ENCODE measurements at regions of chr17 and their contacts with region 1.

Region 1: DNA sequence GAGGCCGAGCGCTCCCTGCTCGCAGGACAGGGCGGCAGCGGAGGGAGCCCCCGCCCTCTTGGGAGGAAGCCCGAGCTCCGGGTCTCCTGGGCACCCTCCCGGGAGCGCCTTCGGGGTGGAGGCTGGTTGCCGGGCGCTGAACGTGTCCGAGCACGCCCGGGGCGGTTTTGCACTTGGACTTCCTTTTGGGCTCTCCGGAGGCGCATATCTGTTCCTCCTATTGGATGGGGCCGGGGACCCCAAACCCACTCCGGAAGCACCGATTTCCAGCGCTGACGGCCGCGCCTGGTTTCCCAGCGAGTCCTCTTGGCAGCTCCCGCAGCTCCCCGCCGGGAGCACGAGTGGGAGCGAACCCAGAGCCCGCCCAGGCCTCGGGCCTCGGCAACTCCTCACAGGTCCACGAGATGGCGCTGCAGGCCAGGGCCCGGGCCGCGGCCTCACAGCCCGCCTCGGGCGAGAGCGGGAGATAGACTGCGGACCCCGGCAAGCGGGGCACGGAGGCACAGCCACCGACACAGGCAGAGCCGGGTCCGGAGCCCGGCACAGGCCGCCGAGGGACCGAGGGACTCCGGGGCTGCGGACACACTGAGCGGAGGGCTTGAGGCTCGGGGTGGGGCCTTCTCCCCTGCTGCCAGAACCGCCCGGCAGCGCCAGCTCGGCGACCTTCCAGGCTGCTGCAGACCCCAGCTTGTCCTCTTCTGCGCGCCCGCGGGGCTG is 12.7 kb downstream of the TBX2 start:
- DNase-seq: no peak
- H3K4me3 ChIP-seq: peak overlapping the region; percentile 59 to 78 (median 66)
- H3K27ac ChIP-seq: peak overlapping the region; percentile 91 to 93 (median 92)
- H3K4me1 ChIP-seq: peaks cover 49 to 95% (median 84%) of the 10 kb centered on the region in 4 donors
- H3K27me3 ChIP-seq: peaks cover 0 to 28% (median 0%) of the 10 kb centered on the region in 4 donors
- CTCF ChIP-seq: peak in 2 of 3 experiments; percentile 95 to 97
- EP300 ChIP-seq: no peak
- POLR2A ChIP-seq: no peak

Region 2: DNA sequence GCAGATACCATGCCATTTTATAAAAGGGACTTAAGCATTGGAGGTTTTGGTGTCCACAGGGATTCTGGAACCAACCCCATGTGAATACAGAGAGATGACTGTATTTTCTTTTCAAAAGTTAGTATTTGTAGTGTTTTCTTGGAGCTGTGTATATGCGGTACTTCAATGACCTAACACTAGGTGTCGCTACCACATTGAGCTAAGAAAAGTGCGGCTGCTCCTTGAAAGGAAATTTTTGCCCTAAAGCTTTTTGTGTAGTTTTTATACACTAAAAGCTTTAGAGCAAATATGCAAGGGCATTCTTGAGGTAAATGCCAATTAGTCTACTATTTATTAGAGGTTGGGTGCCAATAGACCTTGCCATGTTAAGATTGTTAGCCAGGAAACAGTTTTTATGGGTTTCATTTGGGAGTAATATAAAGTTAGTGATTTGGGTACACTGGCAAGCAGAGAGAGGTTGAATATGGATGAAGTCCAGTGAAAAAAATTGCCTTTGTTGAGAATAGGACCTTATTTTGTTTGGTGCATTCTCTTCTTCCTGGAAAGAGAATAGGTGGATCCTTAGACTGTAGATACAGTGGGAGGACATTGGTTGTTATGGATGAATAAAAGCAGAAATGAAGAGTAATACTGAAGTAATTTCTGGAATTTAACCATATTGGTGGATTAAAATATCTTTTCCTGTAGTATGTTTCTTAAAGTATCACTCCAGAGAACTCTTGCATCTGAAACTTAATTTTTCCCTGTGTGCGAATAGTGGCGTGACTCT is 691.4 kb before region 1 on chr17:
- intact Hi-C with region 1: loop called (anchors 10 kb)
- DNase-seq: peak; percentile 81
- H3K4me3 ChIP-seq: no peak overlapping the region
- H3K27ac ChIP-seq: no peak overlapping the region
- H3K4me1 ChIP-seq: peaks cover 0 to 5% (median 4%) of the 10 kb centered on the region in 4 donors
- H3K27me3 ChIP-seq: no peaks in the 10 kb centered on the region
- CTCF ChIP-seq: peak; percentile 71 to 87 (median 84)
- EP300 ChIP-seq: no peak
- POLR2A ChIP-seq: no peak

Region 3: GRCh38 chr17:61551255-61551742 is 139.0 kb after region 1 on chr17:
- intact Hi-C with region 1: loop called (anchors 2 kb)
- DNase-seq: no peak
- H3K4me3 ChIP-seq: no peak overlapping the region
- H3K27ac ChIP-seq: no peak overlapping the region
- H3K4me1 ChIP-seq: no peaks in the 10 kb centered on the region
- H3K27me3 ChIP-seq: no peaks in the 10 kb centered on the region
- CTCF ChIP-seq: peak; percentile 55 to 76 (median 61)
- EP300 ChIP-seq: no peak
- POLR2A ChIP-seq: no peak

Region 4: GRCh38 chr17:61837175-61838051 is 425.1 kb after region 1 on chr17:
- intact Hi-C with region 1: loop called (anchors 5 kb)
- DNase-seq: no peak
- H3K4me3 ChIP-seq: no peak overlapping the region
- H3K27ac ChIP-seq: no peak overlapping the region
- H3K4me1 ChIP-seq: no peaks in the 10 kb centered on the region
- H3K27me3 ChIP-seq: no peaks in the 10 kb centered on the region
- CTCF ChIP-seq: peak; percentile 48 to 65 (median 48)
- EP300 ChIP-seq: no peak
- POLR2A ChIP-seq: no peak

Region 5: GRCh38 chr17:61862975-61863800 is 450.9 kb after region 1 on chr17 and contains the start of gene BRIP1:
- intact Hi-C with region 1: loop called (anchors 10 kb)
- DNase-seq: peak; percentile 98
- H3K4me3 ChIP-seq: peak within 1 kb of the TSS; percentile 73 to 86 (median 74)
- H3K27ac ChIP-seq: peak within 1 kb of the TSS; percentile 77 to 88 (median 80)
- H3K4me1 ChIP-seq: peaks cover 4 to 14% (median 11%) of the 10 kb centered on the region in 4 donors
- H3K27me3 ChIP-seq: no peaks in the 10 kb centered on the region
- CTCF ChIP-seq: peak in 1 of 3 experiments; percentile 3
- EP300 ChIP-seq: no peak
- POLR2A ChIP-seq: no peak
- total RNA-seq, gene BRIP1: 0.13 to 0.42 (median 0.31) TPM

Region 6: GRCh38 chr17:62065598-62066468 is 653.5 kb after region 1 on chr17:
- intact Hi-C with region 1: loop called (anchors 5 kb)
- DNase-seq: peak; percentile 100
- H3K4me3 ChIP-seq: peak overlapping the region; percentile 84 to 89 (median 88)
- H3K27ac ChIP-seq: peak overlapping the region; percentile 95 to 99 (median 98)
- H3K4me1 ChIP-seq: peaks cover 24 to 41% (median 32%) of the 10 kb centered on the region in 4 donors
- H3K27me3 ChIP-seq: no peaks in the 10 kb centered on the region
- CTCF ChIP-seq: peak; percentile 91 to 95 (median 92)
- EP300 ChIP-seq: no peak
- POLR2A ChIP-seq: no peak

Measured in esophagus muscularis mucosa (tissue), 4 donors.